WTC11 (cell line): ENCODE measurements at regions of chr19 and their contacts with region 1.

Region 1: GRCh38 chr19:5048091-5048726 is 79.3 kb downstream of the KDM4B start:
- DNase-seq: peak; percentile 92
- ATAC-seq: peak; percentile 88
- H3K4me3 Mint-ChIP-seq: no peak overlapping the region
- H3K27ac Mint-ChIP-seq: no peak overlapping the region
- H3K4me1 Mint-ChIP-seq: no peaks in the 10 kb centered on the region
- H3K27me3 Mint-ChIP-seq: no peaks in the 10 kb centered on the region
- CTCF ChIP-seq: peak; percentile 99

Region 2: GRCh38 chr19:5074407-5074806 is 26.2 kb after region 1 on chr19:
- CTCF ChIA-PET with region 1: interaction called, 10 read pairs
- POLR2A ChIA-PET with region 1: no interaction called
- DNase-seq: no peak
- ATAC-seq: no peak
- H3K4me3 Mint-ChIP-seq: no peak overlapping the region
- H3K27ac Mint-ChIP-seq: peak overlapping the region; percentile 95
- H3K4me1 Mint-ChIP-seq: peaks cover 35% of the 10 kb centered on the region
- H3K27me3 Mint-ChIP-seq: no peaks in the 10 kb centered on the region
- CTCF ChIP-seq: no peak

Region 3: GRCh38 chr19:5128251-5128935 is 80.2 kb after region 1 on chr19:
- CTCF ChIA-PET with region 1: interaction called, 23 read pairs
- POLR2A ChIA-PET with region 1: interaction called, 3 read pairs
- DNase-seq: no peak
- ATAC-seq: peak; percentile 9; the same call in 1 of the 2 replicates
- H3K4me3 Mint-ChIP-seq: no peak overlapping the region
- H3K27ac Mint-ChIP-seq: no peak overlapping the region
- H3K4me1 Mint-ChIP-seq: peaks cover 48% of the 10 kb centered on the region
- H3K27me3 Mint-ChIP-seq: no peaks in the 10 kb centered on the region
- CTCF ChIP-seq: no peak

Region 4: GRCh38 chr19:5145521-5146511 is 97.6 kb after region 1 on chr19:
- CTCF ChIA-PET with region 1: interaction called, 46 read pairs
- POLR2A ChIA-PET with region 1: no interaction called
- DNase-seq: peak; percentile 10
- ATAC-seq: no peak
- H3K4me3 Mint-ChIP-seq: no peak overlapping the region
- H3K27ac Mint-ChIP-seq: no peak overlapping the region; the same call in 1 of the 2 replicates
- H3K4me1 Mint-ChIP-seq: peaks cover 5% of the 10 kb centered on the region; the same call in 1 of the 2 replicates
- H3K27me3 Mint-ChIP-seq: no peaks in the 10 kb centered on the region
- CTCF ChIP-seq: no peak